ENCODE measurements at regions of chr19 and their contacts with region 1.

Region 1: DNA sequence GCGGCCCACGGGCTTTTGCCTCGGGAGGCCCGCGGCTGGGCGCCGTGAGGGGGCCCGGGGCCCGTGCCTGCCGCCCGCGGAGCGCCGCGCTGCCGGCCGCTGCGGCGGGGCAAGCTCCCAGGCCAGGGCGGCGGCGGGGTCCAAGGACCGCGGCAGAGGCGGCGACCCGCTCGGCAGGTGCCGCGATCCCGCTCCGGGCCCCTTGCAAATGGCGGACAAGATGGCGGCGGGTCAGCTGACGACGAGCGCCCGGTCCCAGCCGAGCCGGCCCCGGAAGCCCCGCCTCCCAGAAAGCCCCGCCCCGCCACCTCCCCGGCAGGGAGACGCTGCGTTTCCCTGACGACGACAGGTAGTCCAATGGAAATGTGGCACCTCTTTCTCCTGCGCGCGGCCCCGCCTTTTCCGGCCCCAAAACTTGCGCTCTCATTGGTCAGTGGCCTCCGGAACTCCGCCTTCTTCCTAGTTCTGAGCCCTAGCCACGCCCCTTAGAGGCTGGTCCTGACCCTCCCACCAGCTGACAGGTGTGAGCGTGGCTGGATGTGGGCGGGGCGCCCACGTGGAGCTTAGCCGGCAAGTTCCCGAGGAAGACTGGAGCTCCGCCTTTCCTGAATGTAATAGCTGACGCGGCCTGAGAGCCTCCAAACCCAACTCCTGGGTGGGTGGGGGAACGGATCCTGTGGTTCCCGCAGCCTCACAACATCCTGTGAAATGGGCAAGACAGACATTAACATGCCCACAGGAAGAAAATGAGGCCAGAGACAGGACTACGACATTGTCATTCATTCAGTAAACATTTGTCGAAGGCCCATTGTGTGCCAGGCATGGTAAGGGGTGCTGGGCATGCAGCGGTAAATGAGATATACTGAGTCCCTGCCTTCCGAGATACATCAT is at the start of gene AP3D1:
- DNase-seq: peak; percentile 100
- H3K4me3 ChIP-seq: peak within 1 kb of the TSS; percentile 98
- H3K27ac ChIP-seq: peak within 1 kb of the TSS; percentile 25 to 33
- H3K4me1 ChIP-seq: peaks cover 12% of the 10 kb centered on the region
- H3K27me3 ChIP-seq: no peaks in the 10 kb centered on the region
- CTCF ChIP-seq: no peak
- EP300 ChIP-seq: no peak
- POLR2A ChIP-seq: no peak
- total RNA-seq, gene AP3D1: 36.7 to 102 (median 75.4) TPM

Region 2: DNA sequence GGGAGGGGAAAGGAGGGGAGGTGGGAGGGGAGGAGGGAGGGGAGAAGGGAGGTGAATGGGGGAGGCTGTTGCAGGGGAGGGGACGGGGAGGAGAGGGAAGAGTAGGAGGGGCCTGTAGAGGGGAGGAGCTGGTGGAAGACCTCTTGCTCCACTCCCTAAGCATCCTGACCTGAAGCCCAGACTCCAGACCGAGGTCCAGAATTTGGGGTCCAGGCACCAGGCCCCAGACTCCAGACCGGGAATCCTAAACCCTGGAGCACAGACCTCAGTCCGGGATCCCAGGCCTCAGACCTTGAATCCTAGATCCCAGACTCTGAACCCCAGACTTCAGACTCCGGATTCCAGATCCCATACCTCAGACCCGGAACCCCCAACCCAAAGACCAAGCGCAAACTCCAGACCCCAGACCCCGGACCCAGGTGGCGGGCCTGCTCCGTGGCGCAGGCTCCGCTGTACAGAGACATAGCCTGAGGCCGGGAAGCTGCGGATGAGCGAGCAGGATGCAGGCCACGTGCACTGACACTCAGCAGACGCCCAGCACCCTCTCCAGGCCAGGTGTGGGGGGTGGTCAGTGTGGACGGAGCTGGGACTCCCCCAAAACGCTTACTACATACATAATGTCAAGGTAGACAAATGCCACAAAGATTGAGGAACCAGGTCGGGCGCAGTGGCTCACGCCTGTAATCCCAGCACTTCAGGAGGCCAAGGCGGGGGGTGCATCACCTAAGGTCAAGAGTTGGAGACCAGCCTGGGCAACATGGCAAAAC is 135.4 kb before region 1 on chr19:
- intact Hi-C with region 1: no loop called
- DNase-seq: peak; percentile 81 to 92 (median 88)
- H3K4me3 ChIP-seq: peak overlapping the region; percentile 21
- H3K27ac ChIP-seq: peak overlapping the region; percentile 60 to 79
- H3K4me1 ChIP-seq: peaks cover 8% of the 10 kb centered on the region
- H3K27me3 ChIP-seq: no peaks in the 10 kb centered on the region
- CTCF ChIP-seq: no peak
- EP300 ChIP-seq: no peak
- POLR2A ChIP-seq: no peak

Region 3: DNA sequence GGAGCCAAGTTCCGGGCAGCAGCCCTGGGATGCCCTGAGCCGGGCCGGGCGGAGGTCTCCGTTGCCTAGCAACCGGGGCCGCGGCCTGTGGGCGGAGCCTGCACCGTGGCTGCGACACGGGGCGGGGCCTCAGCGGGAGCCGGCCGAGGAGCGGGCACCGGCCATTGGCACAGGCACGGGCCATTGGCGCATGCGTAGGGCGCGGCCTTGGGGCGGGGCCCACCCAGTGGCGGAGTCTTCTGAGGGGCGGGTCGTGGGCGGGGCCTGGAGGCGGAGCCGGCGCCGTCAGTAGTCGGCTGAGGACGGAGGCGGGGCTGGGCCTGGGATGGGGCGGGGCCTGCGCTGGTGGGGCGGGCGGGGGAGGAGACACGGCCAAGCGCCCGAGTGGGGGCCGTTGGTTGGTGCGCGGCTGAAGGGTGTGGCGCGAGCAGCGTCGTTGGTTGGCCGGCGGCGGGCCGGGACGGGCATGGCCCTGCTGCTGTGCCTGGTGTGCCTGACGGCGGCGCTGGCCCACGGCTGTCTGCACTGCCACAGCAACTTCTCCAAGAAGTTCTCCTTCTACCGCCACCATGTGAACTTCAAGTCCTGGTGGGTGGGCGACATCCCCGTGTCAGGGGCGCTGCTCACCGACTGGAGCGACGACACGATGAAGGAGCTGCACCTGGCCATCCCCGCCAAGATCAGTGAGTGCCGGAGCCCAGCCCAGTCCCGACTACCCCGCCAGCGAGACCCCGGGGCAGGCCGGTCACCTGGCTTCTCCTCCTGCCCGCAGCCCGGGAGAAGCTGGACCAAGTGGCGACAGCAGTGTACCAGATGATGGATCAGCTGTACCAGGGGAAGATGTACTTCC is 54.9 kb before region 1 on chr19 and contains the start of gene IZUMO4:
- intact Hi-C with region 1: loop called in 1 of 4 experiments (anchors 5 kb)
- DNase-seq: peak; percentile 99 to 100 (median 100)
- H3K4me3 ChIP-seq: peak within 1 kb of the TSS; percentile 96
- H3K27ac ChIP-seq: peak within 1 kb of the TSS; percentile 68 to 88
- H3K4me1 ChIP-seq: peaks cover 19% of the 10 kb centered on the region
- H3K27me3 ChIP-seq: no peaks in the 10 kb centered on the region
- CTCF ChIP-seq: peak in 2 of 3 donors; percentile 45 to 55
- EP300 ChIP-seq: no peak
- POLR2A ChIP-seq: peak; percentile 48
- total RNA-seq, gene IZUMO4: 4.5 to 24.5 (median 10.7) TPM

Region 4: GRCh38 chr19:2236314-2237050 is 84.9 kb after region 1 on chr19 and contains the starts of genes PLEKHJ1 and SF3A2:
- intact Hi-C with region 1: no loop called
- DNase-seq: peak; percentile 97 to 100 (median 97)
- H3K4me3 ChIP-seq: peak within 1 kb of the TSS; percentile 92
- H3K27ac ChIP-seq: peak within 1 kb of the TSS; percentile 92 to 100
- H3K4me1 ChIP-seq: peaks cover 26% of the 10 kb centered on the region
- H3K27me3 ChIP-seq: no peaks in the 10 kb centered on the region
- CTCF ChIP-seq: peak; percentile 95 to 100 (median 100)
- EP300 ChIP-seq: peak; percentile 46
- POLR2A ChIP-seq: peak; percentile 81
- total RNA-seq, gene PLEKHJ1: 39.0 to 55.2 (median 46.8) TPM
- total RNA-seq, gene SF3A2: 33.0 to 137 (median 89.8) TPM

Region 5: DNA sequence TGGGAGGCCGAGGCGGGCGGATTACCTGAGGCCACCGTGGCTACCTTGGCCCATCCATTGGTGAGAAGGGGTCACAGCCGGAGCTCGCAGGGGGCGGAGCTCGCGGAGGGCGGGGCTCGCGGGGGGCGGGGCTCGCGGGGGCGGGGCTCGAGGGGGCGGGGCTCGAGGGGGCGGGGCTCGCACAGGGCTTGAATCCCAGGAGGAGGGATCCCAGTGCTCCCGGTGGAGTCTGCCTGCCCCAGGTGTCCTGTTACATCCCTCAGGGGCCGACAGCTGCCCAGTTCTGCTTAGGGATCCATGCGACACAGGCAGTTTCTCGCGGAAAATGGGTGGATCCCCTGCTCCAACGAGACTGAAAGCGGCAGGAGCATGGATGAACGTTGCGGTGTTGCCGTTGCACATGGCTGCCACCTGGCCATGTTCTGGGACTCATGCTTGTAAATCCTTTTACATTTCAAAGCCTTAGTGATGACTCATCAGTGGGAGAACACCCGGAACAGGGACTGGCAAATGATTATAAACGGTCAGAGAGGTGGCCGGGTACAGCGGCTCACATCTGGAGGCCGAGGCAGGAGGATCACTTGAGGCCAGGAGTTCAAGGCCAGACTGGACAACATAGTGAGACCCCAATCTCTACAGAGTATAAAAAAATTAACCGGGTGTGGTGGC is 233.6 kb after region 1 on chr19:
- intact Hi-C with region 1: loop called in 2 of 4 experiments (anchors 5 to 10 kb)
- DNase-seq: peak in 2 of 5 donors; percentile 21 to 42
- H3K4me3 ChIP-seq: no peak overlapping the region
- H3K27ac ChIP-seq: no peak overlapping the region
- H3K4me1 ChIP-seq: no peaks in the 10 kb centered on the region
- H3K27me3 ChIP-seq: no peaks in the 10 kb centered on the region
- CTCF ChIP-seq: no peak
- EP300 ChIP-seq: no peak
- POLR2A ChIP-seq: no peak

Region 6: GRCh38 chr19:2391118-2391725 is 239.6 kb after region 1 on chr19:
- intact Hi-C with region 1: loop called in 3 of 4 experiments (anchors 5 to 10 kb)
- DNase-seq: peak in 1 of 5 donors; percentile 56
- H3K4me3 ChIP-seq: no peak overlapping the region
- H3K27ac ChIP-seq: no peak overlapping the region
- H3K4me1 ChIP-seq: no peaks in the 10 kb centered on the region
- H3K27me3 ChIP-seq: no peaks in the 10 kb centered on the region
- CTCF ChIP-seq: peak; percentile 52 to 68 (median 64)
- EP300 ChIP-seq: no peak
- POLR2A ChIP-seq: no peak